ENCODE measurements at regions of chr19 and their contacts with region 1.

Region 1: GRCh38 chr19:55132453-55133129 is 15.2 kb upstream of the PPP1R12C start:
- DNase-seq: no peak
- ATAC-seq: no peak
- H3K4me3 ChIP-seq: no peak overlapping the region
- H3K4me3 Mint-ChIP-seq: no peak overlapping the region
- H3K27ac ChIP-seq: no peak overlapping the region
- H3K27ac Mint-ChIP-seq: no peak overlapping the region
- H3K4me1 ChIP-seq: no peaks in the 10 kb centered on the region
- H3K4me1 Mint-ChIP-seq: no peaks in the 10 kb centered on the region
- H3K27me3 ChIP-seq: peaks cover 26 to 27% of the 10 kb centered on the region in 2 experiments
- H3K27me3 Mint-ChIP-seq: peaks cover 49% of the 10 kb centered on the region
- CTCF ChIP-seq: no peak

Region 2: GRCh38 chr19:54616821-54617560 is 515.6 kb before region 1 on chr19:
- CTCF ChIA-PET with region 1: no interaction called
- POLR2A ChIA-PET with region 1: no interaction called
- intact Hi-C with region 1: no loop called
- DNase-seq: peak in 1 of 14 experiments; percentile 41
- ATAC-seq: no peak
- H3K4me3 ChIP-seq: no peak overlapping the region
- H3K4me3 Mint-ChIP-seq: no peak overlapping the region
- H3K27ac ChIP-seq: no peak overlapping the region
- H3K27ac Mint-ChIP-seq: no peak overlapping the region
- H3K4me1 ChIP-seq: no peaks in the 10 kb centered on the region
- H3K4me1 Mint-ChIP-seq: no peaks in the 10 kb centered on the region
- H3K27me3 ChIP-seq: no peaks in the 10 kb centered on the region
- H3K27me3 Mint-ChIP-seq: no peaks in the 10 kb centered on the region
- CTCF ChIP-seq: no peak

Region 3: GRCh38 chr19:55197531-55197930 is 64.9 kb after region 1 on chr19:
- CTCF ChIA-PET with region 1: no interaction called
- POLR2A ChIA-PET with region 1: no interaction called
- intact Hi-C with region 1: loop called in 1 of 2 experiments (anchors 2 kb)
- DNase-seq: no peak
- ATAC-seq: no peak
- H3K4me3 ChIP-seq: no peak overlapping the region
- H3K4me3 Mint-ChIP-seq: no peak overlapping the region
- H3K27ac ChIP-seq: no peak overlapping the region
- H3K27ac Mint-ChIP-seq: no peak overlapping the region
- H3K4me1 ChIP-seq: no peaks in the 10 kb centered on the region
- H3K4me1 Mint-ChIP-seq: no peaks in the 10 kb centered on the region
- H3K27me3 ChIP-seq: peaks cover 5 to 15% of the 10 kb centered on the region in 2 experiments
- H3K27me3 Mint-ChIP-seq: peaks cover 25% of the 10 kb centered on the region
- CTCF ChIP-seq: no peak

Measured in CD4-positive, alpha-beta T cell (primary cell).